Right cardiac atrium (tissue), 5 donors: ENCODE measurements at regions of chr17 and their contacts with region 1.

Region 1: DNA sequence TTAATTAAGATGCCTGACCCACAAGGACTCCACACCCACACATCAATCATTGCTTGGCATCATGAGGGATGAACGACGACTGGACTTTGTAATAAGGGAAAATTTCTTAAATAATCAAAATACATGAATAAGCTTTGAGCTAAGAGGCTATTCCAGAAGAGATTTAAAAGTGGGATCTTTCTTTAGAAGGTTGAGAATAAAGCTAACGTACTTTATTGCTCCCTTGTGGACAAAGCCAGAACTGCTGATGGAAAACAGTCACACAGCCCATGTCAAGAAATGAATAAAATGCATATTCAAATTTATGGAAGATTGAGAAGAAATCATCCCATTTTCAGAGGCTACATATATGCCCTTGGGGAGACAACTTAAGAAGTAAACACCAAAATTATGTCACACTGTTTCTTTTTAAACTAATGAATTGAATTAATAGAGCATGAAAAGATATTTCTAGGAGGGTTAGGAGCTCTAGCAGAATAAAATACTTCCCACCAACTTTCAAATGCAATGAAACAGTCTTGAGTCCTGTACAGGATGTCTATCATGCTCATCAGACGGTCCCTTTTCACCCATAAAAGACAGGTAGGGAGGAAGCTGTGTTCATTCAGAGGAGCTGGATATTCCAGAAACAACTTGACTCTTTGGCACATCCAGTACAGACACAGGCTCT is 60.2 kb upstream of the PHOSPHO1 start:
- DNase-seq: no peak
- ATAC-seq: peak in 1 of 2 donors; percentile 40
- H3K4me3 ChIP-seq: no peak overlapping the region
- H3K27ac ChIP-seq: no peak overlapping the region
- H3K4me1 ChIP-seq: no peaks in the 10 kb centered on the region
- H3K27me3 ChIP-seq: no peaks in the 10 kb centered on the region

Region 2: GRCh38 chr17:49180303-49180702 is 110.5 kb before region 1 on chr17:
- intact Hi-C with region 1: loop called in 1 of 4 experiments (anchors 10 kb)
- DNase-seq: peak; percentile 63 to 83 (median 73)
- ATAC-seq: peak; percentile 52 to 78
- H3K4me3 ChIP-seq: no peak overlapping the region
- H3K27ac ChIP-seq: no peak overlapping the region
- H3K4me1 ChIP-seq: no peaks in the 10 kb centered on the region
- H3K27me3 ChIP-seq: no peaks in the 10 kb centered on the region

Region 3: GRCh38 chr17:49227436-49228261 is 63.2 kb before region 1 on chr17:
- intact Hi-C with region 1: loop called in 2 of 4 experiments (anchors 5 to 10 kb)
- DNase-seq: peak; percentile 75 to 86 (median 86)
- ATAC-seq: peak; percentile 30 to 33
- H3K4me3 ChIP-seq: no peak overlapping the region
- H3K27ac ChIP-seq: no peak overlapping the region
- H3K4me1 ChIP-seq: no peaks in the 10 kb centered on the region
- H3K27me3 ChIP-seq: no peaks in the 10 kb centered on the region

Region 4: DNA sequence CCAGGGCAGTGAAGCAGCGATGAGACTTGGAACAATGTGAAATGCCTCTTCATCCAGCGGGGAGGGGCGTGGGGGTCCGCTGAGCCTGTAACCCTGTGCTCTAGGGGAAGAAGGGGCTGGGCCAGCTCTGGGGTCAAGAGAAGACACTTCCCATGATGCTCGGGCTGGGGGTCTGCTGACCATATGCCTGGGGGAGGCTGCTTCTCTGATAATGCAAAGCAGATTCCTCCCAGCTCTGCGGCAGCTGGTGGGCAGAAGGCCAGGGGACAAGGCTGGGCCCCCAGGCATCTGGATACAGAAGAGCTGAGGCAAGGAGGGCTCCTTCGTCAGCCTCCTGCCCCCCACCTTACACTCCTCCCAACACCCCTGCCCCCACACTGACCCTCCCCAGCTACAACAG is 229.0 kb after region 1 on chr17:
- intact Hi-C with region 1: no loop called
- DNase-seq: peak in 2 of 3 donors; percentile 68 to 74
- ATAC-seq: no peak
- H3K4me3 ChIP-seq: no peak overlapping the region
- H3K27ac ChIP-seq: no peak overlapping the region
- H3K4me1 ChIP-seq: peaks cover 5% of the 10 kb centered on the region
- H3K27me3 ChIP-seq: no peaks in the 10 kb centered on the region

Region 5: DNA sequence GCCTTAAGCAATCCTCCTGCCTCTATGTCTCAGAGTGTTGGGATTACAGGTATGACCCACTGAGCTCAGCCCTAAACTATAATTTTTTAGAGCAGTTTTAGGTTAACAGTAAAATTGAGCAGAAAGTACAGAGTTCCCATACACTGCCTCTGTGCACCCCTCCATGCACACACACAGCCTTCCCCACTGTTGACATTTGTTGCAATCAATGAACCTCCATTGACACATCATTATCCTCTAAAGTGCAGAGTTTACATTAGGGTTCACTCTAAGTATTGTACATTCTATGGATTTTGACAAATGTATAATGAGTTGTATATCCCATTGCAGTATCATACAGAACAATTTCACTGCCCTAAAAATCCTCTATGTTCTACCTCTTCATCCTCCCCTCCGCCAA is 239.3 kb after region 1 on chr17:
- intact Hi-C with region 1: loop called in 1 of 4 experiments (anchors 10 kb)
- DNase-seq: no peak
- ATAC-seq: no peak
- H3K4me3 ChIP-seq: no peak overlapping the region
- H3K27ac ChIP-seq: no peak overlapping the region
- H3K4me1 ChIP-seq: no peaks in the 10 kb centered on the region
- H3K27me3 ChIP-seq: peaks cover 2% of the 10 kb centered on the region